AG04450 (cell line): ENCODE measurements at regions of chr7 and their contacts with region 1.

Region 1: DNA sequence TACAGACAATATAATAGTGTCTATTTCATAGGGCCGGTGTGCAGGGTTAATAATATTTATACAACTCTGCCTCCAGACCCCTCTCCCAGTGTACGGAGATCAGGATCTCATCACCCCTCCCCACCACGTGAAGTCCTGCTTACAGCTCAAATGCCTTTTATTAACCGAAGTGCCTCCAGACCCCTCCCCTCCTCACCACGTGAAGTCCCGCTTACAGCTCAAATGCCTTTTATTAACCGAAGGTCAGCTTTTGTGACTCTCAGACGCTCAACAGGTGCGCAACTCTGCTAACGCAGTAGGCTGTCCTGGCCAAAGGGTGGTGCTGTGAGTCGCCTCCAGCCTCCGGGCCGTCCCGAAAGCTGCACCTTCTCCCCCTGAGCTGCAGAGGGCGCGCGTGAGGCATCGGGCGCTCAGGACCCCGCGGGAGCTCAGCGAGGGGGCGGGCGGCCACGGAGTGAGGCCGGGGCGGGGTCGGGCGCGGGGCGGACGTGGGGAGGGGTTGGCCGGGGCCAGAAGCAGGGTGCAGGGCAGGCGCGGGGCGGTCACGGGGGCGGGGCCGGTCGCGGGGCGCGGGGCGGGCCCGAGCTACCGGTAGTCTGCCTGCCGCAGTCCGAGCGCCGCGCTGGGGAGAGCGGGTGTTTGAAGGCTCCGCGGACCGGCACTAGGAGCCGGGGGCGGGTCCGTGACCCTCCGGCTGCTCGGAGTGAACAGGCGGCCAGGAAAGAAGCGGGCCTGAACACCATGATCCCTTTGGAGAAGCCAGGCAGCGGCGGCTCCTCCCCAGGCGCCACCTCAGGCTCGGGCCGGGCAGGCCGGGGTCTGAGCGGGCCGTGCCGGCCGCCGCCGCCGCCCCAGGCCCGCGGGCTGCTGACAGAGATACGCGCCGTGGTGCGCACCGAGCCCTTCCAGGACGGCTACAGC is at the start of gene STK17A:
- DNase-seq: peak; percentile 79
- H3K4me3 ChIP-seq: peak within 1 kb of the TSS; percentile 90
- H3K27ac ChIP-seq: peak within 1 kb of the TSS; percentile 82
- H3K27me3 ChIP-seq: no peaks in the 10 kb centered on the region
- CTCF ChIP-seq: peak; percentile 99
- polyA plus RNA-seq, gene STK17A: 29.5 and 39.7 TPM in 2 replicates

Region 2: DNA sequence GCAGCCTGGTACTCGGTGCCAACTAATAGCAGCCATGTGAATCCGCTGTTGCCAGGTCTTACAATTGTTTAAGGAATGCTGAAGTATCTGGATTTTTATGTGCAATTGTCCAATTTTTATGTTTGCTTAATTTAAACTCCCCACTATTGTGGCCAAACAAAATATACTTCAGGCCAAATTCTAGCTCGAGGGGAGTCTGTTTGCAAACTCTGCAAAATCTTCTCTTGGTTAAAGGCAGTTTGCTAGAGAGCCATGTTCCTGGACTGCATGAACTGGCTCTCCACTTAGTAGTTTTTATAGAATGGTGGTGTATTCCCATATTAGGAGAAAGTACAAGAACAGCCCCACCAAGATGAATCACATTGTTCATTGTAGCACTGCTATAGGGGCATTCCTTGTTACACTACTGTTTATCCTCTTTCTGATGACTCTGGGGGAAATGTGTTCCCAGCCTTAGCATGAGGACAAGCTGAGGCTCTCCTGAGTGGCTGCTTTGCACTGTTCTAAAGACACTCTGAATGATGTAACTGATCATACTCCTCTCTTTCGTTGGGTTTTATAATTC is 1167.7 kb before region 1 on chr7:
- CTCF ChIA-PET with region 1: no interaction called
- POLR2A ChIA-PET with region 1: no interaction called
- DNase-seq: no peak
- H3K4me3 ChIP-seq: no peak overlapping the region
- H3K27ac ChIP-seq: no peak overlapping the region
- H3K27me3 ChIP-seq: no peaks in the 10 kb centered on the region
- CTCF ChIP-seq: no peak

Region 3: DNA sequence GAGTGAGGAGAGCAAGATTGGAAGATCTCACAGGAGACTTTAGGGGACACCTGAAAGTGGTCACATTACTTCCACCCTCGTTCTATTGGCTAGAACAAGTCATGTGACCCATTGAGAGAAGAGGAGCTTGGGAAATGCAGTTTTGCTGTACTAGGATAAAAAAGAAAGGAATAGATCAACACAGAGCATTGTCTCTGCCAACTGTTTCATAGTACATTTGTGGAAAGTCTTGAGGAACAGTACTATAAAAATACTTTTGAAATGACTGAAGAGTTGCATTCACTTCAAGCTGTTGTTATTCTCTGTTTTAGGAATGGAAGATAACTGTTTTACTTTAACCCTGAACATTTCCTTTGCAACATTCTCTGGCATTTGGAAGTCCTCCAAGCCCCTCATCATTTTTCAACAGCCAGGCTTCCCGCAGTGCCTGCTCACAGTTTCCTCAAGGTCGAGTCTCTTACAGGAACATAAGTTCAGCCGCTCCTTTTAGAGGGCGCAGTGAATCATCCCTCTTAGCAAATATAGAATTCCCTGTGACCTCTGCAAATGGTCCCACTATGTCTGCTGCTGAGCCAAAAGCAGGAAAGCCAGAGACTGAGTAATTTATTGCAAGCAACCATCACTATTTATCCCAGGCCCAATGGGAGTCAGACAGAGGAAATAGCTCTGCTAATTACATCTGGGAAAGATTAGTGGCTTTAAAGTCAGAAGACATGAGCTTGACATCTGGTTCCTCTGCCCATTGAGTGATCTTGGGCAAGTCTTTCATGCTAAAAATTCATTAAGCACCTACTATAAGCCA is 609.9 kb before region 1 on chr7:
- CTCF ChIA-PET with region 1: no interaction called
- POLR2A ChIA-PET with region 1: no interaction called
- DNase-seq: peak; percentile 55
- H3K4me3 ChIP-seq: no peak overlapping the region
- H3K27ac ChIP-seq: peak overlapping the region; percentile 54
- H3K27me3 ChIP-seq: peaks cover 8% of the 10 kb centered on the region
- CTCF ChIP-seq: no peak

Region 4: DNA sequence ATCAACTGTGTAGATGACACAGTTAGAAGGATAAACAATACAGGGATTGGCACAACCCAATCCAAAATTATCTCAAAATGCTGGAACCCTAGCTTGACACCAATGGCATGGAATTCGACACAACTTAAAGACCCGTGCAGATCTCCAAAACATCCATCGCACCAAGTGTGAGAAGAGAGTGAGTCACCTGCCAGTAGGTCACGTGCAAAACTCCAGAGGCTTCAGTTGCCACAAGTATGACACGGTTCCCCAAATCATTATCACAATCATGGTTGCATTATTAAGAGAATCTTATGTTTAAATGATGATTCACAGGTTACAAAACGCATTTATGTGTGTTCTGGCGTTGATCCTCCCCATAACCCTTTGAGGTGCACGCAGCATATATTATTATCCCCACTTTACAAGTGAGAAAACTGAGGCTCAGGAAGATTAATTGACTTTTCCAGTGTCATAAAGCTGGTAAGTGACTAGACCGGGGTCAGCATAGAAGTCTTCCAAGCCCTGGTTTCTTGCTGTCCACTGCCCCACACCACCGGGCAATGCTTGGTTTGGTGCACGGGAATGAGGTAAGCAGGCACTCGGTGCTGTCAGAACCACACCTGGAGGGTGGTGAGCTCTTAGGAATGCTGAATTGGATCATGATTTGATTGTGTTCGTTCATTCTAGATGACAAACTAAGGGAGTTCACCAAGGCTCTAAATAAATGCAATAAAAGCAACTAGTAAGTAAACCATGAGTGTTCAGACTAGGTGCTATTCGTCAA is 23.4 kb before region 1 on chr7:
- CTCF ChIA-PET with region 1: interaction called, 13 read pairs
- POLR2A ChIA-PET with region 1: no interaction called
- DNase-seq: no peak
- H3K4me3 ChIP-seq: no peak overlapping the region
- H3K27ac ChIP-seq: no peak overlapping the region
- H3K27me3 ChIP-seq: peaks cover 11% of the 10 kb centered on the region
- CTCF ChIP-seq: no peak

Region 5: DNA sequence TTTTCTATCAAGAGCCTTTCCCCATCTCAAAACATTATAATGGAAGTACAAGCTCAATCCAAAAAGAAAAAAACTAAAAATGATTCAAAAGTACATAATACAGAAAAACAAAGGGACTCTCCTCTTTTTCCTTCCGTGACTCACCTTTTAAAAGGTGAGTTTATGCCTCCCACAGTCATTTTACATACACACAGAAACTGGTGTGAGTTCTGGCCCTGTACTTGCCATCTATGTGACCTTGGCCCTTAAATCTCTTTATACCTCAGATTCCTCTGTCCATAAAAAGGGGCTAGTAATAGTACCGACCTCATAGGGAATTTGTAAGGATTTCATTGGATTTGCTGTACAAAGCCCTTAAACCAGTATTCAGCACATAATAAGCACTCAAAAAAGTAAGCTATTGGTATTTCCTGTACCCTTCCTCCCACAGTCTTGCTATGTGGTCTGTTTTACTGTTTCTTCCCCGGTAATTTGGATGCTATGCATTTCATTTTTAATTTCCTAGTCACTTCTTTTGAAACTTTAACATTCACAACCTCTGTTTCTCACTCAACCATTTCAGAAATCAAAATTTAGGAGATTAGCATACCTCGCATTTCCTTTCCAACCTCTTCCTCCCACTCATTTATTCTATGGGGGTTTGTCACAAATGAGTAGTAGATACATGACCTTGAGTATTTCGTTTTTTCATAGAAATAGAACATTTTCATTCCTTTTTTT is 39.1 kb after region 1 on chr7:
- CTCF ChIA-PET with region 1: interaction called, 46 read pairs
- POLR2A ChIA-PET with region 1: interaction called, 5 read pairs
- DNase-seq: no peak
- H3K4me3 ChIP-seq: no peak overlapping the region
- H3K27ac ChIP-seq: no peak overlapping the region
- H3K27me3 ChIP-seq: no peaks in the 10 kb centered on the region
- CTCF ChIP-seq: no peak

Region 6: DNA sequence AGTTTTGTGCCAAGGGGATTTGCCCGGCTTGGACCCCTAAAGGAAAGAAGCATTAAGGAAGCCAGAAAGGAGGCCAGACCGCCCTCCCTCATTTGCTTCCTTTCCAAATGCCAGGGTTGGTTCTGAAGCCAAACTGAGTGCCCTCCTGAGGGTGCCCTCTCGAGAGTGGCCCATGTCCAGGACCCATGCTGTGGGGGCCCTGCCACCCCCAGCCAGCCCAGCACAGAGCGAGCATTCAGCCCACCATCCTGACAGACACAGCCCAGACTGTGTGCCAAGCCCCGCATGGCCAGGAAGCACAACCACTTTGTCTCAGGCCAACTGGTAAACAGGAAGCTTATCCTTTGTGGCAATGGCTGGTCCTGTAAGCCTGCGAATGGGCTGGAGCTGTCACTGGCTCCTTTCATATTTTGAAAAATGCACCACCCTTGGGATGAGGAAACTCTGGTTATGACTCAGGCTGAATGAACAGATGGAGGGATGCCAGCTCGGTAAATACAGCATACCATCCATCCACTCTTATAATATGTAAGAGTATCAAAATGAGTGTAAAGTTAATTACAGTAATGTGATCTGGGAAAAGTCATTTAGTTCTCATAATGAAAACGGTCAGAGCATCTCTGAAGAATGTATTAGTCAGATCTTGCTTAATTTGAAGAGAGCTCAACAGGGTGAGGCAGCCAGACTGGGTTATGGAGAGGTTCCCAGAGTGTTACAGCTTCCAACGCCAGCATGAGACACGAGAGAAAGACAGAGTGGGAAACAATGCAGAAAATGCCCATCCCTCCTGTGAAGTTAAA is 65.1 kb after region 1 on chr7:
- CTCF ChIA-PET with region 1: interaction called, 14 read pairs
- POLR2A ChIA-PET with region 1: interaction called, 21 read pairs
- DNase-seq: peak; percentile 99
- H3K4me3 ChIP-seq: peak overlapping the region; percentile 42
- H3K27ac ChIP-seq: peak overlapping the region; percentile 100
- H3K27me3 ChIP-seq: no peaks in the 10 kb centered on the region
- CTCF ChIP-seq: no peak

Region 7: GRCh38 chr7:43693687-43694398 is 111.1 kb after region 1 on chr7:
- CTCF ChIA-PET with region 1: interaction called, 456 read pairs
- POLR2A ChIA-PET with region 1: interaction called, 56 read pairs
- DNase-seq: no peak
- H3K4me3 ChIP-seq: no peak overlapping the region
- H3K27ac ChIP-seq: peak overlapping the region; percentile 85
- H3K27me3 ChIP-seq: no peaks in the 10 kb centered on the region
- CTCF ChIP-seq: no peak

Region 8: DNA sequence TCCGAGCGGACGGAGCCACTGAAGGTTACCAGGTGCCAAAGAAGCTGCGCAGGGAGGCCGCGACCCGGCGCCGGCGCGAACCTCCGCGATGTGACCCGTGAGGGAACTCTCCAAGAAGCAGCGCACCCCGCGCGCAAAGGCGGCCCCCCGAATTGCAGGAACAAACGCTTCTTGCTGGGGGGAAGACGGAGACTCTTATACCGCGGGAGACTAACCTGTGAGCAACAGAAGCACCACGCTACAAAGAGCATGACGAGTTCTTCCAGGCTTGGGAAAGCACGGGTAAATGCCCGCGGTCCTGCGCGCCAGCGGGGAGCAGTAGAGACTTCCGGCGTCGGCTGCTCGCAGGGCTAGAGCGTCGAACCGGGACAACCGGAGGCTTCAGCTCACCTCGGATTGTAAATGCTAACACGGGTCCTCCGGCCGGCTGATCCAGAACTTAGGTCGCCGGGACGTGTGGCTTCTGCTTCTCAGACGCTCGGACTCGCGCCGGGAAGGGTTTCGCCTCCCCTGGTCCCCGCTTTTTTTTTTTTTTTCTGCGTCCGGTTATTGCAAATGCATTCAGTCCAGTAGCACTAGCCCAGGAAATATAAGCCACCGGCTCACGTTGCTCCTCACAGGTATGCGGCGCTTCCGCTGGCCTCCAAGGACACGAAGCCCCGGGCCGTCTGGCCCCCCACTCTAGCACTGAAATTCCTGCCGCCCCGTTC is 146.6 kb after region 1 on chr7 and contains the start of gene COA1:
- CTCF ChIA-PET with region 1: interaction called, 37 read pairs
- POLR2A ChIA-PET with region 1: interaction called, 11 read pairs
- DNase-seq: peak; percentile 82
- H3K4me3 ChIP-seq: peak within 1 kb of the TSS; percentile 89
- H3K27ac ChIP-seq: peak within 1 kb of the TSS; percentile 33
- H3K27me3 ChIP-seq: no peaks in the 10 kb centered on the region
- CTCF ChIP-seq: peak; percentile 25
- polyA plus RNA-seq, gene COA1: 22.4 and 24.4 TPM in 2 replicates

Region 9: DNA sequence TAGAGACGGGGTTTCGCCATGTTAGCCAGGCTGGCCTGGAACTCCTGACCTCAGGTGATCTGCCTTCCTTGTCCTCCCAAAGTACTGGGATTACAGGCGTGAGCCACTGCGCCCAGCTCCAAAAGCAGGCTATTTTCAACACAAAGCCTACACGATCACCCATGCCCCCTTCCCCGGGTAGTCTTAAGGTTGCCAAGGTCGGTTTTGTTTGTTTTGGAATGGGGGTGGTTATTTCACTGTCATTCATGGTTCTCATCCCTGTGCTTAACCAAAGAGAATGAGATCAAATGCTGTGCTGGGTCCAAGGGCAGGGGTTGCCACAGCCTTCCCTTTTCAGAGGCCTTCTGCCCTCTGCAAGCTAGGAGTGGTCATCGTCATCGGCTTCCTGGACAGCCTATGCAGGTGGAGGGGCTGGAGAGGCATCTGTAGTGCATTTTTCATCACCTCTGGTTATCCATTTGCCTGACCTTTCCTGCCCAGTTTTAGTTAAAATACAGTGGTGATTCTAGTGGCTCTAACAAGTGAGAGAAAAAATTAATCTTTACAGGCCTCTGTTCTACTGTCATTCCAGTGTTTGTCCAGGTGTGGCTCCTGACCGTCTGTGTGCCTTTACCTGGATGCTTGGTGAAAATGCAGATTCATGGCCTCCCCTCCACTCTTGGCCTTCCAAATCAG is 187.2 kb after region 1 on chr7:
- CTCF ChIA-PET with region 1: no interaction called
- POLR2A ChIA-PET with region 1: no interaction called
- DNase-seq: no peak
- H3K4me3 ChIP-seq: no peak overlapping the region
- H3K27ac ChIP-seq: no peak overlapping the region
- H3K27me3 ChIP-seq: no peaks in the 10 kb centered on the region
- CTCF ChIP-seq: no peak